HEK293 (cell line): ENCODE measurements at regions of chr12 and their contacts with region 1.

Region 1: GRCh38 chr12:120228291-120229070 is 27.6 kb upstream of the RPLP0 start:
- H3K4me3 ChIP-seq: no peak overlapping the region
- H3K27ac ChIP-seq: peak overlapping the region; percentile 4; the same call in 1 of the 2 replicates
- H3K4me1 ChIP-seq: peaks cover 42% of the 10 kb centered on the region
- CTCF ChIP-seq: peak; percentile 94

Region 2: DNA sequence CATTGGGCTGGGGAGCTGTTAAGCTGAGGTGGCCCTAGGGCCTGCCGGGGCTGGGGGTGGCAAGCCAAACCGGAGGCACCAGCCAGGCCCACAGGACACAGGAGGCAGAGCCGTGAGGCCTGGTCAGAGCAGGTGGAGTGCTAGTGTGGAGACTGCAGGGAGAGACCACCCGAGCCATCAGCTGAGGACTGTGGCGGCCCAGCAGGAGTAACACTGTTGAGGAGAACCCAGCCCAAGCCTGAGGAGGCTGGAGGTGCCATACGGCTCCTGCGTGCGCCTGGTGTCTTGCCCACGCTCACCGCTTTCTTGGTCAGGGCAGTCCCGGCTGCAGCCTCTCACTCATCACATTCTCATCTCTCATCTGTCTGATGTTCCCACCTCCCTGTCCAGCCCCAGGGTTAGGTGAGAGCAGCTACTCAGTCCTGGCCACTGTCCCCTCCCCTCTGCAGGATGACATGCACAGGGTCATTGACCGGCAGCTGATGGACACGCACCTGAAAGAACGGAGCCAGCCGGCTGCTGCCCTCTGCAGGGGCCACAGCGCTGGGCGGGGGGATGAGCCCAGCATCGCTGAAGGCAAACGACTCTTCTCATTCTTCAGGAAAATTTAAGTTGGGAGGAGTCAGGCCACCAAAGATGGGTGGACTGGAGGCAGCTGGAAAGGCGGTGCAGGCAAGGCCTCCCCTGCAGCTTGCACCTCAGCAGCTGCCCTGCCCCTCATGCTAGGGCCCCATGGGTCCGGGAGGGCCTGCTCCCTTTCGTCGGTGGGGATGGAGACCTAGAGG is 135.7 kb before region 1 on chr12:
- CTCF ChIA-PET with region 1: no interaction called
- POLR2A ChIA-PET with region 1: no interaction called
- H3K4me3 ChIP-seq: no peak overlapping the region
- H3K27ac ChIP-seq: 0 out of 2 replicates have a peak overlapping the region, but pooled peaks have one; percentile 24
- H3K4me1 ChIP-seq: peaks cover 8% of the 10 kb centered on the region; the same call in 1 of the 2 replicates
- CTCF ChIP-seq: no peak

Region 3: GRCh38 chr12:120216742-120217605 is 11.5 kb before region 1 on chr12:
- CTCF ChIA-PET with region 1: interaction called, 30 read pairs
- POLR2A ChIA-PET with region 1: interaction called, 8 read pairs
- H3K4me3 ChIP-seq: no peak overlapping the region
- H3K27ac ChIP-seq: no peak overlapping the region
- H3K4me1 ChIP-seq: no peaks in the 10 kb centered on the region
- CTCF ChIP-seq: no peak

Region 4: DNA sequence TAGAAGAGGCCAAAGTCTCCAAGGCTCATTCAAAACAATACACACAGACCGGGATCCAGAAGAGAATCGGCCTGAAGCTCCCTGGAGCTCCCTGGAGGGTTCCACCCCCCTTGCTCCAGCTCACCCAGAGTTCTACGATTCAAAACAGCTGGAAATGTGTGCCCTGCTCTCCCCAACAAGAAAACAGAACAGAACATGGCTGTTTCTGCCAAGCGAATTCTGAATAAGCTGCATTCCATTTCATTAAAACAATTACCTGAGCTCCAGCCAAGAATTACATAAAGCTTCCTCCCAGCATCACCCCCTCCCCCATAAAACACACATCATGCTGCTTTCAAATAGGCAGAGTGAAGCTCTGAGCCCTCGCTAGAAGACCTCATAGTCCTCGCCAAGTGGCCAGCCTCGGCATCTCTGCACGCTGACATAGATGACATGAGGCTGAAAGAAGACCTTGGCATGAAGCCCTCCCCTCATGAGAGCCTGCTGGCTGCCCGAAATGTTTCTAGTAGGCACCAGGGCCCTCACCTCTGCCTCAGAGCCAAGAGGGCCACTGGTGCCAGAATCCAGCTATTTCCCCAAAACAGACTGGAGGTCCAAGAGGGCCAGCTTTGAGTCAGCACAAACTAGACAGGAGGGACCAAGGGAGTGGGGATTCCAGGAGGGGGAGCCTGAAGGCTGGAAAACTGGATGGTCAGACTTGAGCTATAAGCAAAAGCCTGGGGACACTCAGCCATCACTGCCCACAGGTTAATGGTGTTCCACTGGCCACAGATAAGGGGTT is 28.8 kb after region 1 on chr12:
- CTCF ChIA-PET with region 1: interaction called, 581 read pairs
- POLR2A ChIA-PET with region 1: interaction called, 126 read pairs
- H3K4me3 ChIP-seq: no peak overlapping the region
- H3K27ac ChIP-seq: no peak overlapping the region
- H3K4me1 ChIP-seq: peaks cover 5% of the 10 kb centered on the region; the same call in 1 of the 2 replicates
- CTCF ChIP-seq: 0 out of 2 replicates have a peak, but pooled peaks have one; percentile 11

Region 5: GRCh38 chr12:120276734-120277133 is 48.3 kb after region 1 on chr12:
- CTCF ChIA-PET with region 1: interaction called, 13 read pairs
- POLR2A ChIA-PET with region 1: interaction called, 4 read pairs
- H3K4me3 ChIP-seq: no peak overlapping the region
- H3K27ac ChIP-seq: no peak overlapping the region
- H3K4me1 ChIP-seq: no peaks in the 10 kb centered on the region
- CTCF ChIP-seq: no peak

Region 6: DNA sequence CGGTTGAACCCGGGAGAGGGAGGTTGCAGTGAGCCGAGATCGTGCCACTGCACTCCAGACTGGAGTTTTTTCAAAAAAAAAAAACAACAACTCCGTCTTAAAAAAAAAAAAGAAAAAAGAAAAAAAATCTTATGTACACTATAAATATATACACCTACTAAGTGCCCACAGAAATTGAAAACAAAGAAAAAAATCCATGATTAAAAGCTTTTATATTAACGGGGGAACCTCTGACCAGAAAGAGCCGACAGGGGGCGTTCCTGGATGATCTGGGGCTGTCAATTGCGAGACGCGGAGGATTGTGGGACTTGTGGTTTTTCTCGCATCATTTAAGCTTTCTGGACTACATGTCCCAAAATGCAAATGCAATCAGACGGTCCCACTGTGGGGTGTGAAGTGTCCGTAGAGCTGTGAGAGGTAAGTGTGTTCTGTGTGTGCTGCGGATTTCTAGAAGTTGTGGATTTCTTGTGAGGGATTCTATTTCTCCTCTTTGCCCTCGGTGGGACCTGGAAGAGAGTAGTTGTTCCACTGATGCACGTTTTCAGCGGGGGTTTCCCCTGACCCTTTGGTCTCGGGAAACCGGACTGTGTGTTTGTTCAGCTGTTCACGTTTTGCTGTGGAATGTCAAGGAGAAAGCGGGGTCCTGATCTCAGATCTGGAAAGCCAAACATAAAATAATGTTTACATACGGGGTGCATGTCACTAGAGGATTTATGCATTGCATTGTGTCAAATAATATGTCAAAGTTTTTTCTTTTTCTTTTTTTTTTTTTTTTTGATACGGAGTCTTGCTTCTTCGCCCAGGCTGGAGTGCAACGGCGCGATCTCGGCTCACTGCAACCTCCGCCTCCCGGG is 73.7 kb after region 1 on chr12 and contains the start of gene SIRT4:
- CTCF ChIA-PET with region 1: interaction called, 12 read pairs
- POLR2A ChIA-PET with region 1: interaction called, 5 read pairs
- H3K4me3 ChIP-seq: peak within 1 kb of the TSS; percentile 51
- H3K27ac ChIP-seq: peak within 1 kb of the TSS; percentile 40; the same call in 1 of the 2 replicates
- H3K4me1 ChIP-seq: no peaks in the 10 kb centered on the region
- CTCF ChIP-seq: peak; percentile 82